H1 (cell line): ENCODE measurements at regions of chr6 and their contacts with region 1.

Region 1: DNA sequence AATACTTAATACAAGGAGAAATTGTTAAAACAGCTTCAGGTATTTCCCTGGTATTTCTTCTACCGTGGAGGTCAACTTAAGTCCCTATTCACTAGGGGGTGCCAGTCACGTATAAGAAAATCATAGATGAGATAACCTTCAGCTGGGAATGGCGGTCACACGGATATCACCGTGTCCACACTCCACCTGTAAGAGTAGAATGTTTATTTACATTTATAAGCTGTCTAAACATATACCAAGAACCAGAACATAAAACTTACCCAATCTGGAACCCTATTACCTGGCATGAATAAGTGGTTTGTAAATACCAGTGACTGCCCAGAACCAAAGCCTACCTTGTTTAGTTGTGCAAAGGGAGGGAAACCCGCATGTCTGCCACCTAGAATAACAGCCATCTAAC is 1.9 kb upstream of the ELOVL4 start:
- DNase-seq: peak in 1 of 2 experiments; percentile 72
- H3K4me3 ChIP-seq: peak overlapping the region in 1 of 4 experiments; percentile 25; a peak in 1 of 8 replicates
- H3K27ac ChIP-seq: no peak overlapping the region
- H3K4me1 ChIP-seq: peaks cover 0 to 7% (median 4%) of the 10 kb centered on the region in 4 experiments; a peak in 4 of 7 replicates
- H3K27me3 ChIP-seq: no peaks in the 10 kb centered on the region; a peak in 2 of 7 replicates
- CTCF ChIP-seq: peak in 2 of 3 experiments; percentile 60 to 71; a peak in 3 of 4 replicates
- EP300 ChIP-seq: no peak
- POLR2A ChIP-seq: no peak
- RAD21 ChIP-seq: peak; percentile 77 to 82

Region 2: GRCh38 chr6:79928478-79928998 is 20.7 kb before region 1 on chr6:
- CTCF ChIA-PET with region 1: interaction called, 18 read pairs
- POLR2A ChIA-PET with region 1: interaction called, 7 read pairs
- DNase-seq: no peak
- H3K4me3 ChIP-seq: no peak overlapping the region
- H3K27ac ChIP-seq: no peak overlapping the region
- H3K4me1 ChIP-seq: peaks cover 0 to 3% (median 1%) of the 10 kb centered on the region in 4 experiments; a peak in 2 of 7 replicates
- H3K27me3 ChIP-seq: no peaks in the 10 kb centered on the region
- CTCF ChIP-seq: no peak
- EP300 ChIP-seq: no peak
- POLR2A ChIP-seq: no peak
- RAD21 ChIP-seq: no peak

Region 3: DNA sequence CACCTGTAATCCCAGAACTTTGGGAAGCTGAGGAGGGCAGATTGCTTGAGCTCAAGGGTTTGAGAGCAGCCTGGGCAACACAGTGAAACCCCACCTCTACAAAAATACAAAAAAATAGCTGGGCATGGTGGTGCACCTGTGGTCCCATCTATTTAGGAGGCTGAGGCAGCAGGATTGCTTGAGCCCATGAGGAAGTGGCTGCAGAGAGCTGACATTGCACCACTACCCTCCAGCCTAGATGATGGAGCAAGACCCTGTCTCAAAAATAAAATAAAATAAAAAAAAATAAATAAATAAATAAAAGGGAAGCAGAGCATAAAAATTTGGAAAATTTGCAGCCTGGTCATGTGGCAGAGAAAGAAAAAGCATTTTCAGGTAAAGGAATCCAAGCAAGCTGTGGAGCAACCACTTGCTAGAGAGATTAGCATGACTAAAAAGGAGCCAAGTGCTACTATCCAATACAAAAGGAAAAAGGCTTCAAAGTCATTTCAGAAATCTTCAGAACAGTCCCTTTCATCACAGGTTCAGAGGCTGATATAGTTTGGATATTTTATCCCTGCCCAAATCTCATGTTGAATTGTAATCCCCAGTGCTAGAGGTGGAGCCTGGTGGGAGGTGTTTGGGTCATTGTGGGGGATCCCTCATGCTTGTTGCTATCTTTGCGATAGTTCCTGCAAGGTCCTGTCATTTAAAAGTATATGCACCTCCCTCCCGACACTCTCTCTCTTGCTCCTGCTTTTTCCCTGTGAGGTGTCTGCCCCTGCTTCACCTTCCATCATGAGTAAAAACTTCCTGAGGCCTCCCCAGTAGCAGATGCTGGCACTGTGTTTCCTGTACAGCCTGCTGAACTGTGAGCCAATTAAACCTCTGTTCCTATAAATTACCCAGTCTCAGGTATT is 44.0 kb after region 1 on chr6:
- CTCF ChIA-PET with region 1: interaction called, 23 read pairs
- POLR2A ChIA-PET with region 1: interaction called, 8 read pairs
- DNase-seq: peak in 1 of 2 experiments; percentile 54
- H3K4me3 ChIP-seq: peak overlapping the region in 1 of 4 experiments; percentile 40; a peak in 1 of 8 replicates
- H3K27ac ChIP-seq: no peak overlapping the region
- H3K4me1 ChIP-seq: peaks cover 5 to 13% (median 10%) of the 10 kb centered on the region in 4 experiments; a peak in 6 of 7 replicates
- H3K27me3 ChIP-seq: no peaks in the 10 kb centered on the region
- CTCF ChIP-seq: no peak
- EP300 ChIP-seq: no peak
- POLR2A ChIP-seq: no peak
- RAD21 ChIP-seq: no peak

Region 4: GRCh38 chr6:80010289-80010688 is 61.1 kb after region 1 on chr6:
- CTCF ChIA-PET with region 1: interaction called, 10 read pairs
- POLR2A ChIA-PET with region 1: interaction called, 3 read pairs
- DNase-seq: no peak
- H3K4me3 ChIP-seq: no peak overlapping the region
- H3K27ac ChIP-seq: no peak overlapping the region
- H3K4me1 ChIP-seq: no peaks in the 10 kb centered on the region; a peak in 1 of 7 replicates
- H3K27me3 ChIP-seq: no peaks in the 10 kb centered on the region
- CTCF ChIP-seq: peak in 1 of 3 experiments; percentile 21; a peak in 1 of 4 replicates
- EP300 ChIP-seq: no peak
- POLR2A ChIP-seq: no peak
- RAD21 ChIP-seq: peak; percentile 17 to 45; a peak in 3 of 4 replicates

Region 5: DNA sequence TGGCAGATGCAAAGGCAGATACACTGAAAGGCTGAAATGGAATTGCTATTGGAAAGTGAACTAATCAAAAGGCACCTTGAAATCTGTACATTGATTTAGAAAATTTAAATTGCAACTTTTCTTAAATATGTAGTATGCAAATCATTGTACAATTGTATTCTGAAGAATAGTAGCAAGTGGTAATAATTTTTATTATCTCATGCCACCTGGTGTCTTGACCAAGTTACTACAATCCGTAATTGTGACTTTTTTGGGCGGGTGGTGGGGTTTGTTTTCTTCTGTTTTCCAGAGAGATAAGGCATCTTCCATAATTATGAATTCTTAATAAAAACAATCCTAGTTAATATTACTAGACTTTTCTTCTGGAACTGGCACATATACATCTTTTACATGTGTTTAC is 144.8 kb after region 1 on chr6:
- CTCF ChIA-PET with region 1: interaction called, 15 read pairs
- POLR2A ChIA-PET with region 1: no interaction called
- DNase-seq: no peak
- H3K4me3 ChIP-seq: no peak overlapping the region
- H3K27ac ChIP-seq: no peak overlapping the region
- H3K4me1 ChIP-seq: no peaks in the 10 kb centered on the region
- H3K27me3 ChIP-seq: no peaks in the 10 kb centered on the region
- CTCF ChIP-seq: peak in 2 of 3 experiments; percentile 21 to 35; a peak in 2 of 4 replicates
- EP300 ChIP-seq: no peak
- POLR2A ChIP-seq: no peak
- RAD21 ChIP-seq: peak; percentile 62 to 64